ENCODE measurements at regions of chr4 and their contacts with region 1.

Region 1: DNA sequence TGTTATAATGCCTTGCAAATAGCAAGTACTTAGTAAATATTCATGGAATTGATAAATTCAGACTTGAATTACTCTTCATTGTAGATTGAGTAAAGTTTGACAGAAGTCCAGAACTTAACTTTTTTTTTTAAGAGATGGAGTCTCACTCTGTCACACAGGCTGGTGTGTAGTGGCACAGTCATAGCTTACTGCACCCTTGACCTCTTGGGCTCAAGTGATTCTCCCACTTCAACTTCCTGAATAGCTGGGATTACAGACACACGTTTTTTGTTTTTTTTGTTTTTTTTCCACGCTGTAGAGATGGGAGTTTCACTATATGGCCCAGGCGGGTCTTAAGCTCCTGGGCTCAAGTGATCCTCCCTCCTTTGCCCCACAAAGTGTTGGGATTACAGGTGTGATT is 32.1 kb downstream of the UBE2K start:
- DNase-seq: no peak
- H3K4me3 Mint-ChIP-seq: no peak overlapping the region
- H3K27ac Mint-ChIP-seq: no peak overlapping the region
- H3K4me1 Mint-ChIP-seq: peaks cover 18% of the 10 kb centered on the region
- H3K27me3 Mint-ChIP-seq: no peaks in the 10 kb centered on the region

Region 2: GRCh38 chr4:39741401-39741800 is 11.3 kb after region 1 on chr4:
- CTCF ChIA-PET with region 1: interaction called, 10 read pairs
- POLR2A ChIA-PET with region 1: no interaction called
- DNase-seq: no peak
- H3K4me3 Mint-ChIP-seq: no peak overlapping the region
- H3K27ac Mint-ChIP-seq: no peak overlapping the region
- H3K4me1 Mint-ChIP-seq: peaks cover 2% of the 10 kb centered on the region
- H3K27me3 Mint-ChIP-seq: no peaks in the 10 kb centered on the region

Measured in activated CD4-positive, alpha-beta memory T cell treated with anti-CD3 and anti-CD28 coated beads, Interleukin-2, amount 10 ng/mL, durations not matched to agents 7 days and 5 days (primary cell).